Kidney (tissue), 22 donors: ENCODE measurements at regions of chr18 and their contacts with region 1.

Region 1: GRCh38 chr18:51110073-51110803 is 80.2 kb downstream of the SMAD4 start:
- DNase-seq: peak; percentile 43 to 87 (median 71)
- H3K4me3 ChIP-seq: no peak overlapping the region
- H3K27ac ChIP-seq: no peak overlapping the region
- H3K4me1 ChIP-seq: no peaks in the 10 kb centered on the region
- H3K27me3 ChIP-seq: no peaks in the 10 kb centered on the region
- CTCF ChIP-seq: peak; percentile 94

Region 2: DNA sequence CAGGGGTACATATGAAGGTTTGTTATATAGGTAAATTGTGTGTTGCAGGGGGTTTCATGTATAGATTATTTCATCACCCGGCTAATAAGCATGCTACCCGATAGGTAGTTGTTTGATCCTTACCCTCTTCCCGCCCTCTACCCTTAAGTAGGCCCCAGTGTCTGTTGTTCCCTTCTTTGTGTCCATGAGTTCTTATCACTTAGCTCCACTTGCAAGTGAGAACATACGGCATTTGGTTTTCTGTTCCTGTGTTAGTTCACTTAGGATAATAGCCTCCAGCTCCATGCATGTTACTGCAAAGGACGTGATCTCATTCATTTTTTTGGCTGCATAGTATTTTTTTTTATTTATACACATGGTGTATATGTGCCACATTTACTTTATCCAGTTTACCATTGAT is 176.6 kb before region 1 on chr18:
- intact Hi-C with region 1: no loop called
- DNase-seq: no peak
- H3K4me3 ChIP-seq: no peak overlapping the region
- H3K27ac ChIP-seq: no peak overlapping the region
- H3K4me1 ChIP-seq: no peaks in the 10 kb centered on the region
- H3K27me3 ChIP-seq: no peaks in the 10 kb centered on the region
- CTCF ChIP-seq: no peak

Region 3: DNA sequence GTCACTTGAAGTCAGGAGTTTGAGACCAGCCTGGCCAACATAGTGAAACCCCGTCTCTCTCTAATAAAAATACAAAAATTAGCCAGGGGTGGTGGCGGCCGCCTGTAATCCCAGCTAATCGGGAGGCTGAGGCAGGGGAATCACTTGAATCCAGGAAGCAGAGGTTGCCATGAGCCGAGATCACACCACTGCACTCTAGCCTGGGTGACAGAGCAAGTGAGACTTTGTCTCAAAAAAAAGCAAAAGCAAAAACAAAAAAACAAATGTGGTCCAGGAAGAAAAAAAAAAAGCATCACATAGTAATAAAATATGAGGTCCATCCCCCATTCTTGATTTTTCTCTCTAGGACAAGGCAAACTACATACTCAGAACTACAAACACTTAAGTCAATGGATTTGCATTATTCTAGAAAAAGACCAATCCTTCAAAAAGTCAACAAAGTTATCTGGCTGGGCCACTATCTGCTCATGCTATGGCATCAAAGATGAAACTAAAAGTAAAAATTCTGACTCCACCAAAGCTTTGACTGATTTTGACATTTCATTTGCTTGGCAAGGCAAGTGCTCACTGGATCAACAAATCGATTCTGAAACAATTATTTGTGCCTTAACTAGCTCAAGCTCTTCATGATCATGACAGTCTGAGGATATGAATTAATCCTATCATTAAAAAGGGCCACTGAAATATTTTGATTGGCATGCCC is 58.9 kb after region 1 on chr18:
- intact Hi-C with region 1: no loop called
- DNase-seq: no peak
- H3K4me3 ChIP-seq: no peak overlapping the region
- H3K27ac ChIP-seq: no peak overlapping the region
- H3K4me1 ChIP-seq: no peaks in the 10 kb centered on the region
- H3K27me3 ChIP-seq: no peaks in the 10 kb centered on the region
- CTCF ChIP-seq: no peak

Region 4: DNA sequence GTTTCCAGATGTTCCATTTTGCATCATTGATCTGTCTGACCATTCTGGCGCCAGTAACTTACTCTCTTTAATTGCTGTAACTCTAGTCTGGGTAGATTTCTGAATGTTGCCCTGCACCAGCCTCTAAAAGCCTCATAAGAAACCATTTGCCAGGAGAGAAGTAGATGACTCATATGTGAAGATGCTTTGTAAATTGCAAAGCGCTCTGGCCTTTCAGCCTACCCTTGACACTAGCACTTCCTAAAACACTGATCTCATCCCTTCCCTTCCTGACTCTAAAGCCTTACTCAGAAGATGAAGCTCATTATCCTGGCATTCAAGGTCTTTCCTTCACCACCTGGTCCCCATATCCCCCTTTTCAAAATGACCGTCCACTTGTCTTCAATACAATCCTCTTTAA is 280.5 kb after region 1 on chr18:
- intact Hi-C with region 1: loop called (anchors 10 kb)
- DNase-seq: no peak
- H3K4me3 ChIP-seq: no peak overlapping the region
- H3K27ac ChIP-seq: no peak overlapping the region
- H3K4me1 ChIP-seq: no peaks in the 10 kb centered on the region
- H3K27me3 ChIP-seq: no peaks in the 10 kb centered on the region
- CTCF ChIP-seq: no peak

Region 5: DNA sequence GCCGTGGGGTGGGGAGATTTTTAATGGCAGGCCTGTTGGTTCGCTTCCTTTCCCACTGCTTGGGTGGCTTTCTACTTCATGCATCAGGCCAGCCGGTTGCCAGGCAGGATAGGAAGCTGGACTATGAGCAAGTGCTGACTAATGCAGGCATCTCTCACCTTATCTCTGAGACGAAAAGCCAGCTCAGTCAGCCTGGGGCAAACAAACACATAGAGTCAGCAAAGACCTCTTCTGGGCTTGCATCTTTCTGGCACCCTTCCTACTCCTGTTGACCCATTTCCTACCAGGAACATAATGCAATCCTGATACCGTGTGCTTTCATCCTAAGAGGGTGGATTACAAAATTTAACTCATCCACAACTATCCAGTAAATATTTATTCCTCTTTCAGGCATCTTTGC is 503.8 kb after region 1 on chr18:
- intact Hi-C with region 1: loop called (anchors 10 kb)
- DNase-seq: no peak
- H3K4me3 ChIP-seq: no peak overlapping the region
- H3K27ac ChIP-seq: no peak overlapping the region
- H3K4me1 ChIP-seq: no peaks in the 10 kb centered on the region
- H3K27me3 ChIP-seq: no peaks in the 10 kb centered on the region
- CTCF ChIP-seq: no peak